Calu3 (cell line): ENCODE measurements at regions of chr1 and their contacts with region 1.

Region 1: DNA sequence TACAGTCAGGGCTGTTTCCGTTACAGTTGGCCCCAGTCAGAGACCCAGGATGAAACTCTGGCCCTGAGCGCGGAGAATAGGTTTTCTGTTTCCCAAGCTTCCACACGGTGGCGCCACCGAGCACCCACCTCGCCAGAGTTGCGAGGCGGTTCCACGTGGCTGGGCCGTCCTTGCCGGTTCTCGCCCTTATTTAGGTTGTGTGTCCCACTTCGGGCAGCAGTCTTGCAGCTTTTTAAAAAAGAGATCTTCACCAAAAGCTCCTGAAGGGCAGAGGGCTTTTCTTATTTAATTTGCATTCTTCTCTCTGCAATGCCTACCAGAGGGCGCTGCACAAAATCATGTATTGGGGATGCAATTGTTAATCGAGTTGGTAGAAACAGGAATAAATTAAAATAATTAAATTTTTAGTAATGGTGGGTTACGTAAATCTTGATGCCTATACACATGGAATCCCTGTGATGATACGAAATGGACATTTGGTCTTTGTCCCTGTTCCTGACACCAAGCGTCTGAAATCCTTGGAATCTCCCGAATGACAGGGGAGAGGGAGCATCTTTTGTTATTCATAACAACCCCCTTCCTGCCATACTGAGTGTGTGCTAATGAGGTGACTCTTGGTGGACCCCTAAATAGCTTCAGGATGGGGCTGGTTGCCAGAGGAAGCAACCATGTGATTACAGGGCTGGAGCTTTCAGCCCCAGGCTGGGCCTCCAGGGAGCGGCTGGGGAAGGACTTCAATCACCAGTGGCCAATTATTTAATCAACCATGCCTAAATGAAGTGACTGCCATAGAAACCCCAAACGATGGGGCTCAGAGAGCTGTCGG is 5.6 kb upstream of the S100A7 start:
- DNase-seq: peak; percentile 77
- H3K4me3 Mint-ChIP-seq: no peak overlapping the region
- H3K27ac Mint-ChIP-seq: no peak overlapping the region
- H3K4me1 Mint-ChIP-seq: no peaks in the 10 kb centered on the region
- H3K27me3 Mint-ChIP-seq: peaks cover 92% of the 10 kb centered on the region
- CTCF ChIP-seq: peak; percentile 94

Region 2: DNA sequence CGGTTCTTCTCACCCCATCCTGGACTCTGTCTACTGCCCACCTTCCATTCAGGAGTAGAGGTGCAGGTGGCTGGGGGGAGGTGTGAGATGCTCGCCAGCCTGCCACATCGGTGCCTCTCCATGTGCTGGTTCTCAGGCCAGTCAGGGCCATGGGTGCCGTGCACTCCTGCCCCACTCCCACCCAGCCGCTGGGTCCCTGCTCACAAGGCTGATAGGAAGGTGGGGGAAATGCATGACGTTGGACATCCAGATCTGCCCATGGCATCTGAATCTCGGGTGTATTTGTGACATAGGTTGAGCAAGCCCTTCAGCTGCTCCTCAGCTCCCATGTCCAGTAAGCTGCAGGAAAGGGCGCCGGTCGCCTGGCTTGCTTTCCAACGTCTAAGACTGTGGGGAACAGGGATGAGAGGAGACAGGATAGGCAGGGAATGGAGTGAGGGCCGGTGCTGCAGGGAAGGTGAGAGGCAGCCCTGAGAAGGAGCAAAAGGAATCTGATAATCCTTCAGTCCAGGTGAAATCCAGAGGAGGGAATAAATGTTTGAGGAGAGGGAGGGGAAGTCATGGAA is 37.9 kb before region 1 on chr1:
- CTCF ChIA-PET with region 1: no interaction called
- intact Hi-C with region 1: no loop called
- DNase-seq: no peak
- H3K4me3 Mint-ChIP-seq: no peak overlapping the region
- H3K27ac Mint-ChIP-seq: no peak overlapping the region
- H3K4me1 Mint-ChIP-seq: no peaks in the 10 kb centered on the region
- H3K27me3 Mint-ChIP-seq: peaks cover 96% of the 10 kb centered on the region
- CTCF ChIP-seq: no peak

Region 3: DNA sequence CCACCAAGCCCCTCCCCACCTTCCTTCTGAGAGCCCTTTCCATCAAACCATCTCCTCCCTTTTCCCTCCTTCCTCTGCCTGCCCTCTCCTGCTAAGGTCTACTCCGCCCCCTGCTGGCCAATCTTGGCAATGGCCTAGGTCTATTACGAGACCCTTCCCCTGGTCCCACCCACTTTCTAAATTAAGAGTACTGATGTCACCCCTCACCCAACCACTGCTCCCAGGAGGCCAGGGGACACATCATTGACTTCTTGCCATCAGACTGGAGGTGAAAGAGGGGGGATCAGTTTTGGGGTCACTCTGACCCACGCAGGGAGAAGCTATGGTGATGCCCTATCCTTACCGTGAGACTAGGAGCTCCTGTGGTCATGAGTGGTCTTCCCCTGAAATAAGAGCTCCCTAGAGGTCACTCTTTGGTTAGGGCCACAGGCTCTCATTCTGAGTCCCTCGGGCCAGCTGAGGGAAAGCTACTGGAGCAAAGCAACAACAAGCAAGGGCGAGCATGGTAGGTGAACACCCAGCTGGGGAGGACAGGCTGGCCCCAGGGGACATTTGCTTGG is 29.0 kb after region 1 on chr1:
- CTCF ChIA-PET with region 1: no interaction called
- intact Hi-C with region 1: loop called (anchors 2 kb)
- DNase-seq: peak; percentile 91
- H3K4me3 Mint-ChIP-seq: no peak overlapping the region
- H3K27ac Mint-ChIP-seq: no peak overlapping the region
- H3K4me1 Mint-ChIP-seq: peaks cover 8% of the 10 kb centered on the region
- H3K27me3 Mint-ChIP-seq: peaks cover 71% of the 10 kb centered on the region
- CTCF ChIP-seq: peak; percentile 97